ENCODE measurements at regions of chr4 and their contacts with region 1.

Region 1: DNA sequence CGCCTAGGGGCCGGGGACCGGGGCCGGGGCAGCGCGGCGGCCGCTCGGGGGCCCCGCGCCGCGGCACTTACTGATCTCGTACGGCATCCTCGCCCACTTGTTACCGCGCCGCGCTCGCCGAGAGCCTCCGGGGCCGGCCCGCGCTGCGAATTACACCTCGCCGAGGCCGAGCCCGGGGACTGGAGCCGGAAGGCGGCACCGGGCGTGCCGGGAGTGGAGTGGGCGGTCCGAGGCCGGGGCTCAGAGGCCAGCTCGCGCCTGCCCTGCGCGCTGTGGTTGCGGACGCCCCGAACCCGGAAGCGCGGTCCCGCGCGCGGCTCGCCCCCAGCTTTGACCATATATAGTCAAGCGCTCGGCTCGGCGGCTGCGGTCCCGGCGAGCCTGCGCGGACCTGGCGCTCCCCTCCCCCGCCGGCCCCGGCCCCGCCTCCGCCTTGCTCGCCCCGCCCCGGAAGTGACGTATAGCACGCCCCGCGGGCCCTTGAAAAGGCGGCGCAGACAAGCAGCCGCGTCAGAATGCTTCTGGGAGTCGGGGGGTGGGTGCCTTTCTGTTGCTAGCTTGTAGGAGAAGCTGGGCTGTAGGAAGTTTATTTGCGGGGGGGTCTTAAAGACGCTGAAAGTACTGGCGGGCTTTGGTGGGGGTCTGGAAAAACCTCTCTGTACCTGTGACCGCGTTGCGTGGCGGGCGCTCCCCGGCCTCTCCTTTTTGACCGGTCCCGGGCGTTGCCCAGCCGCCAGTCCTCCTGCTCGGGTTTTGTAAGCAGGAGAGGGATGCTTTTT is at the start of gene WDR1:
- DNase-seq: peak; percentile 84 to 95 (median 91)
- ATAC-seq: peak; percentile 89
- H3K4me3 ChIP-seq: peak within 1 kb of the TSS; percentile 78
- H3K4me3 Mint-ChIP-seq: peak within 1 kb of the TSS; percentile 93 to 99 (median 97)
- H3K27ac ChIP-seq: peak within 1 kb of the TSS; percentile 97
- H3K27ac Mint-ChIP-seq: peak within 1 kb of the TSS; percentile 96 to 100 (median 99)
- H3K4me1 ChIP-seq: peaks cover 35 to 66% of the 10 kb centered on the region in 2 donors
- H3K4me1 Mint-ChIP-seq: peaks cover 60 to 92% (median 86%) of the 10 kb centered on the region in 7 donors
- H3K27me3 ChIP-seq: no peaks in the 10 kb centered on the region
- H3K27me3 Mint-ChIP-seq: no peaks in the 10 kb centered on the region
- total RNA-seq, gene WDR1: 242 to 470 (median 330) TPM

Region 2: GRCh38 chr4:9691238-9692065 is 425.3 kb before region 1 on chr4:
- CTCF ChIA-PET with region 1: no interaction called
- POLR2A ChIA-PET with region 1: interaction called, 11 read pairs
- intact Hi-C with region 1: loop called (anchors 1 to 2 kb)
- DNase-seq: peak; percentile 80 to 88 (median 86)
- ATAC-seq: peak; percentile 100
- H3K4me3 ChIP-seq: peak overlapping the region; percentile 61
- H3K4me3 Mint-ChIP-seq: peak overlapping the region; percentile 65 to 92 (median 86)
- H3K27ac ChIP-seq: peak overlapping the region; percentile 77
- H3K27ac Mint-ChIP-seq: peak overlapping the region; percentile 79 to 91 (median 83)
- H3K4me1 ChIP-seq: no peaks in the 10 kb centered on the region
- H3K4me1 Mint-ChIP-seq: peaks cover 9 to 26% (median 24%) of the 10 kb centered on the region in 7 donors
- H3K27me3 ChIP-seq: no peaks in the 10 kb centered on the region
- H3K27me3 Mint-ChIP-seq: peaks cover 0 to 9% (median 0%) of the 10 kb centered on the region in 5 donors

Region 3: DNA sequence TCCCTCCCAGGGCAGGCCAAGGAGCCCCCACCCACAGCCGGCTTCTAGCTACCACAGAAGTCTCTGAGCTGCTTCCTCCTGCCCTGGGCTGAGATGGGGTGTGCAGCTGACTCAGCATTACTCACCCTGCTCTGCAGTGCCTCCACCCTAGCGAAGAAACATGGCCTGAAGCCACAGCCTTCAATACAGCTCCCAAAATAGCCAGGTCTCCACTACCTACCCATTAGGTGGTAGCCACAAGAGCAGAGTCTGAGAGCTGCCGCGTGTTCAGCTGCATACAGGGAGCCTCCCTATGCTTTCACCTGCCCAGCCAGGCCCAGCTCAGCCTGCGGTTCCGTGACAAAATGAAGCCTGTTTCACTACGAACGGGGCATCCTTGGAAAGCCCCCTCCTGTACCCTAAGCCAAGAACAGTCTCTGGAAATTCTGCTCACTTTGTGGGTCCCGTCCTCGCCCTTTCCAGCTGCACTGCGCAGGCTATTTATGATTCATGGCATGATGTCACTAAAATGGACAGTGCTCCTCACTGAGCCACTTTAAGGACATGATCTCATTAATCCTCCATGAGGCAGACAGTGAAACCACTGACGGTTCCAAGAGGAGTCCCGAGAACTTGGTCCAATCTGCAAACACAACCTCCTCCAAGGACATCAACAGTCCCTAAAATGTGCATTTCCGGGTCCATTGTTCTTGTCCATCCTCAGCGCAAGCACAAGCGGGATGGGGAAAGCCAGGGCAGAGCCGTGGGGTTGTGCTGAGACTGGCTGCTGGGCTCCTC is 20.4 kb before region 1 on chr4:
- CTCF ChIA-PET with region 1: interaction called, 15 read pairs
- POLR2A ChIA-PET with region 1: interaction called, 341 read pairs
- intact Hi-C with region 1: loop called (anchors 1 kb)
- DNase-seq: peak; percentile 39 to 76 (median 69)
- ATAC-seq: peak; percentile 81
- H3K4me3 ChIP-seq: peak overlapping the region; percentile 21
- H3K4me3 Mint-ChIP-seq: peak overlapping the region in 9 of 10 donors; percentile 16 to 79 (median 55)
- H3K27ac ChIP-seq: peak overlapping the region; percentile 67
- H3K27ac Mint-ChIP-seq: peak overlapping the region; percentile 82 to 95 (median 90)
- H3K4me1 ChIP-seq: peaks cover 75 to 82% of the 10 kb centered on the region in 2 donors
- H3K4me1 Mint-ChIP-seq: peaks cover 66 to 100% (median 94%) of the 10 kb centered on the region in 7 donors
- H3K27me3 ChIP-seq: no peaks in the 10 kb centered on the region
- H3K27me3 Mint-ChIP-seq: no peaks in the 10 kb centered on the region

Region 4: DNA sequence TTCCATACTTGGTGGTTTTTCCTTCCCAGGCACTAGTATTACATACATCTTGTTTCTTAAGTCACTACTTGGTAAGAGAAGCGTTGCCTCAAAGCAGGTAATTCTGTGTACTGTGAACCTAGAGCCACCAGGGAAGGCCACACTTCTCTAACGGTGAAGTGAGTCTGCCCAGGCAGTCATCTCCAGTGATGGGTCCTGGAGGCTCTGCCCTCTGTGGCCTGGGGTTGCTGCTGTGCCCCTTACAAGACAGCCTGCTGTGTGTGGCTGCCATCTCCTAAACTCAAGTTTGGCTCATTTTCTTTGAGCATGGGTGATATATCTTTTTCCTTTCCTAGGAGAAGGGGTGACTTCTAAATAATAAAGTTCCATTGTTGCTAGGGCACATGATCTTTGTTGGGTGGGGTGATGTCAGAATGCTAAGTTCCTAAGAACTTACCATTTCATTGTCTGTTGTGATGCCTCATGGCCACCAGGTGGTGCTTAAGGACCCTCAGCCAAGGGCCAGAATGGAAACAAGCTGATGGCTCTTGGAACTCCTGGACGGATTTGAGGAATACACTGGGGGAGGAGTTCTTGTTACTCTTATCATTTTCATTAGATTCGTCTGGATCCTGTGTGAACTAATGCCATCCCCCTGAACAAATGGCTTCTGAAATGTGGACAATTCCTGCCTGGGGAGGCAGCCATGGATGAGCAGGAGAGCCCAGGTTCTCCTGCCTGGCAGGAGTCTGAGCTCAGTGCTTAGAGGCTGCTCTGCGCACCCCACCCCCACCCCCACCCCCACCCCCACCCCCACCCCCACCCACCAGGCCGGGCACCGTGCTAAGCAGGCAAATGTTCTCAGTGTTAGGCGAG is 40.9 kb after region 1 on chr4:
- CTCF ChIA-PET with region 1: interaction called, 11 read pairs
- POLR2A ChIA-PET with region 1: interaction called, 97 read pairs
- intact Hi-C with region 1: loop called (anchors 1 kb)
- DNase-seq: peak in 7 of 9 donors; percentile 4 to 37 (median 32)
- ATAC-seq: peak; percentile 63
- H3K4me3 ChIP-seq: no peak overlapping the region
- H3K4me3 Mint-ChIP-seq: peak overlapping the region in 5 of 10 donors; percentile 19 to 48 (median 25)
- H3K27ac ChIP-seq: no peak overlapping the region
- H3K27ac Mint-ChIP-seq: peak overlapping the region in 7 of 9 donors; percentile 12 to 86 (median 60)
- H3K4me1 ChIP-seq: peaks cover 8 to 39% of the 10 kb centered on the region in 2 donors
- H3K4me1 Mint-ChIP-seq: peaks cover 14 to 57% (median 50%) of the 10 kb centered on the region in 7 donors
- H3K27me3 ChIP-seq: no peaks in the 10 kb centered on the region
- H3K27me3 Mint-ChIP-seq: no peaks in the 10 kb centered on the region

Region 5: GRCh38 chr4:10245751-10246150 is 129.0 kb after region 1 on chr4:
- CTCF ChIA-PET with region 1: no interaction called
- POLR2A ChIA-PET with region 1: no interaction called
- intact Hi-C with region 1: no loop called
- DNase-seq: no peak
- ATAC-seq: no peak
- H3K4me3 ChIP-seq: no peak overlapping the region
- H3K4me3 Mint-ChIP-seq: no peak overlapping the region
- H3K27ac ChIP-seq: no peak overlapping the region
- H3K27ac Mint-ChIP-seq: no peak overlapping the region
- H3K4me1 ChIP-seq: no peaks in the 10 kb centered on the region
- H3K4me1 Mint-ChIP-seq: peaks cover 0 to 4% (median 0%) of the 10 kb centered on the region in 7 donors
- H3K27me3 ChIP-seq: no peaks in the 10 kb centered on the region
- H3K27me3 Mint-ChIP-seq: peaks cover 0 to 19% (median 13%) of the 10 kb centered on the region in 5 donors

Region 6: GRCh38 chr4:10461091-10461849 is 344.5 kb after region 1 on chr4:
- CTCF ChIA-PET with region 1: interaction called, 9 read pairs
- POLR2A ChIA-PET with region 1: interaction called, 24 read pairs
- intact Hi-C with region 1: loop called (anchors 1 kb)
- DNase-seq: peak; percentile 52 to 90 (median 80)
- ATAC-seq: peak; percentile 89
- H3K4me3 ChIP-seq: peak overlapping the region; percentile 61
- H3K4me3 Mint-ChIP-seq: peak overlapping the region; percentile 77 to 92 (median 86)
- H3K27ac ChIP-seq: no peak overlapping the region
- H3K27ac Mint-ChIP-seq: peak overlapping the region in 4 of 9 donors; percentile 3 to 85 (median 45)
- H3K4me1 ChIP-seq: peaks cover 4 to 6% of the 10 kb centered on the region in 2 donors
- H3K4me1 Mint-ChIP-seq: peaks cover 14 to 38% (median 30%) of the 10 kb centered on the region in 7 donors
- H3K27me3 ChIP-seq: no peaks in the 10 kb centered on the region
- H3K27me3 Mint-ChIP-seq: peaks cover 21 to 43% (median 34%) of the 10 kb centered on the region in 5 donors

Region 7: GRCh38 chr4:11471618-11472017 is 1354.8 kb after region 1 on chr4:
- CTCF ChIA-PET with region 1: no interaction called
- POLR2A ChIA-PET with region 1: interaction called, 3 read pairs
- intact Hi-C with region 1: loop called in 1 of 2 experiments (anchors 1 kb)
- DNase-seq: peak; percentile 12 to 82 (median 75)
- ATAC-seq: peak; percentile 96
- H3K4me3 ChIP-seq: peak overlapping the region; percentile 66
- H3K4me3 Mint-ChIP-seq: peak overlapping the region; percentile 71 to 95 (median 90)
- H3K27ac ChIP-seq: peak overlapping the region; percentile 67
- H3K27ac Mint-ChIP-seq: peak overlapping the region; percentile 94 to 99 (median 96)
- H3K4me1 ChIP-seq: peaks cover 14 to 25% of the 10 kb centered on the region in 2 donors
- H3K4me1 Mint-ChIP-seq: peaks cover 28 to 61% (median 45%) of the 10 kb centered on the region in 7 donors
- H3K27me3 ChIP-seq: no peaks in the 10 kb centered on the region
- H3K27me3 Mint-ChIP-seq: peaks cover 0 to under 1% (median 0%) of the 10 kb centered on the region in 5 donors